Posterior cingulate gyrus (tissue), 11 donors: ENCODE measurements at regions of chr12 and their contacts with region 1.

Region 1: DNA sequence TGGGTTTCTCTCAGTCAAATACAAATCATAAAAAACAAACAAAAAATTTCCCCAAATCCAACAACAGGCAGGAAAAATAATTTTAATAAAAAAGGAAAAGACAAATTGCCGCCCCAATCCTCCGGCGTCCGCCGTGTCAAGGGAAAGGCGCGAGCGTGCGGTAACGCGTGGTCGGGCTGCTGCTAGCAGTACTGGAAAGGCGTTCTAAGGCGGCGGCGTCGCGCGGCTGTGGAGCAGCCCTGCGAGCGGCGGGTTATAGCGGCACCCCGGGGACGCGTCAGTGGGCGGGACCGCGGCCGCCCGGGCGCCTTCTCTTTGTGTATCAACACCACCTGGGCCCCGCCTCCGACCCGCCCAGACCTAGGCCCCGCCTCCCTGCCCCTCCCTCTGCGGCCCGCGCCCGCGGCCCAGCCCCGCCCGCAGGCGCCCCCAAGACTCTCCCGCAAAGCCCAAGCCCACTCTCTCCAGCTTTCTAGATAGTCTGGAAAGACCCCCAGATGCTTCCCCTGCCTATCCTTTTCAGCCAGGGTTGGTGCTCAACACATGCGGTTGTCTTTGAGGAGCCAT is at the start of gene SLC38A2:
- DNase-seq: peak; percentile 95 to 100 (median 98)

Region 2: GRCh38 chr12:46266869-46267574 is 105.6 kb before region 1 on chr12:
- intact Hi-C with region 1: no loop called
- DNase-seq: peak; percentile 18 to 94 (median 66)

Region 3: DNA sequence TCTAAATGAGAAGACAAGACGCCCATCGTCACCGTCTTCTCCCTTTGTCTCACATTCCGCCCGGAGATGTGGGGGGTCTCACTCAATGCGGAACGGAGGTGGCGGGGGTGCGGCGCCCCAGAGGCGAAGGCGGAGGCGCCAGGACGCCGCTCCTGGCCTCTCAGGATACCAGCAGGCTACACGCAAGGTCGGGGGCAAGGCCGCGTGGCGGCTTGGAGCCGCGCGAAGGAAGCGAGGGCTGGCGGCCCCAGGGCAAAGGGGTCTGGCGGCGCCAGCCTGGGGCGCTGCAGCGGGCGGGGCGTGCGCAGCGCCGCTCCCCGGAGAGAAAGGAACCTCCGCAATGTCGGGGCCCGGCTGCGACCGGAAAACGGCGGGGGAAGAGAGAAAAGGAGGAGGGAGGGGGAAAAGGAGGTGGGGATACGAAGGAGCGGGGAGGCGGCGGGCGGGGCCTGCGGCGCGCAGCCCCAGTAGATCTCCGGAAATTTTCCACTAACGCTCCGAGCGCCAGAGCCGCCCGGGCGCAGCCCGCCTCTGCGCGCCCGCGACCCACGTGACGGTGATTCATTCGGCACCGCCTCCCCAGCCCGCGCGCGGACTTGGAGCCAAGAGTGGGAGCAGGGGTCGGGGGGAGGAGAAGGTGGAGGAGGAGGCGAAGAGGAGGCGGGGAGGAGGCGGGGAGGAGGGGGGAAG is 10.5 kb after region 1 on chr12:
- intact Hi-C with region 1: loop called (anchors 1 kb)
- DNase-seq: peak; percentile 93 to 99 (median 96)

Region 4: GRCh38 chr12:46661110-46661845 is 288.7 kb after region 1 on chr12:
- intact Hi-C with region 1: loop called (anchors 10 kb)
- DNase-seq: no peak

Region 5: DNA sequence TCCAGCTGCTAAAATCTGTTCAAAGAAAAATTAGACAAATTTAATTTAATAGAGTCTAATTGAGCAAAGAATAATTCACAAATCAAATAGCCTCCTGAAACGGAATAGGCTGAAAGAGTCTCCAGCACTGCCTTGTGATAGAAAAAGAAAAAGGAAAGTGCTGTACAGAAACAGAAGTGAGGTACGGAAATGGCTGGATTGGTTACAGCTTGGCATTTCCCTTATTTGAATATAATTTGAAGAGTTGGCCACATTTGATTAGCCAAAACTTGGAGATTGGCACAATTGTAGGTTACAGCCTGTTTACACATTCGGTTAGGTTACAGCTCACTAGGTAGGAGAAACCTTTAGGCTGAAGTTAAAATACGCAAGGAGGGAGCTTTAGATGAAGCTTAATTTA is 682.0 kb after region 1 on chr12:
- intact Hi-C with region 1: no loop called
- DNase-seq: no peak